OCI-LY7 (cell line): ENCODE measurements at regions of chr6 and their contacts with region 1.

Region 1: GRCh38 chr6:26607434-26608230 is 10.9 kb downstream of the ABT1 start:
- DNase-seq: peak; percentile 80
- H3K4me3 ChIP-seq: peak overlapping the region; percentile 21
- H3K27ac ChIP-seq: no peak overlapping the region
- H3K4me1 ChIP-seq: no peaks in the 10 kb centered on the region
- CTCF ChIP-seq: peak; percentile 96

Region 2: DNA sequence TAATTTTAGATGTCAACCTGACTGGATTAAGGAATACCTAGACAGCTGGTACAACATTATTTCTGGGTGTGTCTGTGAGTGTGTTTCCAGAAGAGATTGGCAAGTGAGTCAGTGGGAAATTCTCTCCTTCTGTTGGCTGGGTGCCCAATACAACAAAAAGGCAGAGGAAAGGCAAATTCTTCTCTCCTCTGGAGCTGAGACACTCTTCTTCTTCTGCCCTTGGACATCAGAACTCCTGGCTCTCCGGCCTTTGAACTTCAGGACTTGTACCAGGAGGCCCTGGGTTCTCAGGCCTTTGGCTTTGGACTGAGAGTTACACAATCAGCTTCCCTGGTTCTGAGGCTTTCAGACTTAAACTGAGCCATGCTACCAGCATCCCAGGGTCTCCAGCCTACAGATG is 213.3 kb before region 1 on chr6:
- CTCF ChIA-PET with region 1: no interaction called
- POLR2A ChIA-PET with region 1: no interaction called
- intact Hi-C with region 1: no loop called
- DNase-seq: no peak
- H3K4me3 ChIP-seq: no peak overlapping the region
- H3K27ac ChIP-seq: no peak overlapping the region
- H3K4me1 ChIP-seq: peaks cover 14% of the 10 kb centered on the region
- CTCF ChIP-seq: no peak

Region 3: DNA sequence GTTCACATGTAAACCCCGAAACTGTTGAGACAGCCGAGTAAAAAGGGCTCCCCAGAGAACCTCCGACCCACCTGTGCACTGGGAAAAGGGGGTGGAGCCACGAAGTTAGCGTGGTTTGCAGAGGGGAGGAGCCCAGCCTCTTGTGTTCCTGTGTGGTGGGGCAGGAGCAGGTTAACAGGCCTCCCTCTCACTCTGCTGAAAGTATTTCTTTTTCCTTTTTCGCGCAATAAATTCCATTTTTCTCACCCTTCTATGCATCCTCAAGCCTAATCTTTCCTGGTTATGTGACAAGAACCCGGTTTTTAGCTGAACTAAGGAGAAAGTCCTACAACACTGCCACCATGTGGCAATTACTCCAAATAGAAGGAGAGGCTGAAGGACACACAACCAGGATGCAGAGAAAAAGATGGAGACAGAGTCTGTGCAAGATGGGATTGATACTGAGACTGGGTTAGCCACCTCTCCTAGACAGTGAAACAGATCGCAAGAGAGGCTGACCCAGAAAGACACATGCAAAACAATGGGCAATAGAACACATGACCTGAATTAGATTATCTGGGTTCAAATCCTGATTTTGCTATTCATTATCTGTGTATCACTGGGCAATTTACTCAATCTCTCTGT is 471.2 kb after region 1 on chr6:
- CTCF ChIA-PET with region 1: no interaction called
- POLR2A ChIA-PET with region 1: no interaction called
- intact Hi-C with region 1: loop called (anchors 1 kb)
- DNase-seq: peak; percentile 67
- H3K4me3 ChIP-seq: peak overlapping the region; percentile 62
- H3K27ac ChIP-seq: no peak overlapping the region
- H3K4me1 ChIP-seq: no peaks in the 10 kb centered on the region
- CTCF ChIP-seq: peak; percentile 96

Region 4: DNA sequence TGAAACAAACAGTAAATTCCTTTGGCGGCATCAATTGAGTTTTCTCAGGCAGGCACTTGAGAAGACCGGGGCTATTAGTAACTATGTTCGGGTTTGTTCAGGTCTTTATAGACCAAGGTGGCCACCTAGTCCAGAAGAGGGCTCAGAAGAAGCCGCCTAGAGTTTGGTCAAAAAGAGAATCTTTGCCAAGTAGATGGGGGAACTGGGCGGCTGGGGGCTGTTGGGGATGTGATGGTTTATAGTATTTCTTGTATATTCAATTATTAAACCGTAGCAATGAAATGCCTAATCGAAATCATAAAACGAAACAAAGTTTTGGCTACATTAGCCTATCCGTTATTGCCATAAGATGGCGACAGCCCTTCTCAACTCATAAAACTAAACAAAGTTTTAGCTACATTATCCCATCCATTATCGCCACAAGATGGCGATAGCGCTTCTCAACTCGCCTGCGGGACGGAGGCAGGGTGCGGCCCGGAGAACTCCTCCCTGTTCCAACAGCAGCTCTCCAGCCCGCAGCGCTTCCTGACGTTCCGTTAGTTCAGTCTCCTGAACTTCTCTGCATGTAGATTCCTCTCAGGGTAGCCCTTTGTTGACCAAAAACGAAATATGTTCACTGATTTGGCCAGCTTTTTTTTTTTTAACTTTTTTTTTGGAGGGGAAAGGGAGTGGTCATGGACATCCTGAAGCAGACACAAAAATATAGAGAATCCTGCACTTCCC is 519.3 kb after region 1 on chr6:
- CTCF ChIA-PET with region 1: no interaction called
- POLR2A ChIA-PET with region 1: no interaction called
- intact Hi-C with region 1: loop called (anchors 5 kb)
- DNase-seq: peak; percentile 88
- H3K4me3 ChIP-seq: peak overlapping the region; percentile 41
- H3K27ac ChIP-seq: peak overlapping the region; percentile 99
- H3K4me1 ChIP-seq: peaks cover 55% of the 10 kb centered on the region
- CTCF ChIP-seq: peak; percentile 93